Activated CD4-positive, alpha-beta T cell treated with anti-CD3 and anti-CD28 coated beads for 36 hours (primary cell): ENCODE measurements at regions of chr2 and their contacts with region 1.

Region 1: DNA sequence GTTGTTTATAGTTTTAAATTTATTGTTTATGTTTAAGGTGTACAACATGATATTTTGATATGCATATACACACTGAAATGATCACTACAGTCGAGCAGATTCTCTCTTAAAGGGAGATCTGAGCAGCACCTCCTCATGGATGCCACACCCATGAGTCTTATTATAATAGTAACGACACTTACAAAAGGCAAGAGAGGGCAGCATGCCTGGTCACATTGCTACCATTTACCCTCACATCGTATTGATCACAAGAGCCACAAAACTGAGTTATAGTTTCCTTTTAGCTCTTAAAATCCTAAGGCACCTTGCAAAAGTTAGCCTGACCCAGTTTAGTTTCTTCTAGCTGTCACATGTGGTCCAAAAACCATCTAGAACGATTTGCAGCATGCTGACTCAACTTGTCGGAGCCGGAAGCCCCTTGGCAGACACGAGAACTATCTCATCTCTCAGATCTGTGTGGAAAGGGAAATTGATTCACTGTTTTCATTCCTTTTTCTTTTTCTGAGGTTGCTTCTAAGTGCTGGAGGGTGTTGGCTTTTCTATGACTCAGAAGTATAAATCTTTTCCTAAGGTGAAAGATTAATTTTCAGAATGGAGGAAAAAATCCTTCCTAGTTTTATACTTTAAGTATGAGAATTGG is 85.3 kb downstream of the CDC42EP3 start:
- DNase-seq: peak; percentile 83
- ATAC-seq: peak; percentile 85
- H3K4me3 Mint-ChIP-seq: peak overlapping the region; percentile 22
- H3K27ac Mint-ChIP-seq: peak overlapping the region; percentile 52
- H3K4me1 Mint-ChIP-seq: peaks cover 90% of the 10 kb centered on the region
- H3K27me3 Mint-ChIP-seq: no peaks in the 10 kb centered on the region

Region 2: DNA sequence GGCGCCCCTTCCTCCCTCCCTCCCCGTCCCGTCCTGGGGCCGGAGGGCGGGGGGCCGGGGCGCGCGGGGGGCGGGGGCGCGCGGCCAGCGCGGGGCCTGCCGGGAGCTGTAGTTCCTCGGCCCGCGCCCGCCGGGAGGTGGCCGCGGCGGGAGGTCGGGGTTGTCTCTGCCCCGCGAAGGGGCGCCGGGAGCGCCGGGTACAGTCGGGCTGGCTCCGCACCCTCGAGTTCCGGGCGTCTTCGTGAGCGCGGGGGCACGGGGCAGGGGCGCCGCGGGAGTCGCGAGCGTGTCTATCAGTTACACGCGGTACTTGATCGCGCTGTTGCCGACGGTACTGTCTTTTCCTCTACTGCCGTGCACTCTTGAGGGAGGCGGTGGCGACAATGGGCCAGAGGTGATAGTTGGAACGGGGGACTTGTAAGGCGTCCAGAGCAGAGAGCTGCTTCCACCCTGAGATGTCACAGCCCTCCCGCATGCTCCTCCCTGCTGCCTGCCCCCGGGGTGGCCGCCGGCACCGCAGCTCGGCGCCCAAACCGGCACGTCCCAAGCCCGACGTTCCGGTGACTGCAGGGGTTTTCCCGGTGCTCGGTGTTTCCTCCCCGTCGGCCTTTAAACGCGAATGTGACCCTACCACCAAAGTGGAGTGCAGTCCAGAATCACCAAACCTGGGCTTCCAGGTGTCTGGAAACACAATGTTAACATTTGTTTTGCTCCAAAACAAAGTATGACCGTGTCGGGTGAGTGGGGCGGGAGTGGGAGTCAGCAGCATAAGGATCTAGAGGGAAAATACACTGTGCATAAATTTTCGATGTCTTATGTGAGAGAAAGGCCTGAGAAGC is 261.1 kb before region 1 on chr2 and contains the start of gene PRKD3:
- CTCF ChIA-PET with region 1: no interaction called
- POLR2A ChIA-PET with region 1: no interaction called
- intact Hi-C with region 1: loop called in 1 of 2 experiments (anchors 5 kb)
- DNase-seq: peak; percentile 66
- ATAC-seq: peak; percentile 76
- H3K4me3 Mint-ChIP-seq: peak within 1 kb of the TSS; percentile 91
- H3K27ac Mint-ChIP-seq: peak within 1 kb of the TSS; percentile 92
- H3K4me1 Mint-ChIP-seq: peaks cover 27% of the 10 kb centered on the region
- H3K27me3 Mint-ChIP-seq: peaks cover 17% of the 10 kb centered on the region
- total RNA-seq, gene PRKD3: 17.4 to 22.8 TPM

Region 3: DNA sequence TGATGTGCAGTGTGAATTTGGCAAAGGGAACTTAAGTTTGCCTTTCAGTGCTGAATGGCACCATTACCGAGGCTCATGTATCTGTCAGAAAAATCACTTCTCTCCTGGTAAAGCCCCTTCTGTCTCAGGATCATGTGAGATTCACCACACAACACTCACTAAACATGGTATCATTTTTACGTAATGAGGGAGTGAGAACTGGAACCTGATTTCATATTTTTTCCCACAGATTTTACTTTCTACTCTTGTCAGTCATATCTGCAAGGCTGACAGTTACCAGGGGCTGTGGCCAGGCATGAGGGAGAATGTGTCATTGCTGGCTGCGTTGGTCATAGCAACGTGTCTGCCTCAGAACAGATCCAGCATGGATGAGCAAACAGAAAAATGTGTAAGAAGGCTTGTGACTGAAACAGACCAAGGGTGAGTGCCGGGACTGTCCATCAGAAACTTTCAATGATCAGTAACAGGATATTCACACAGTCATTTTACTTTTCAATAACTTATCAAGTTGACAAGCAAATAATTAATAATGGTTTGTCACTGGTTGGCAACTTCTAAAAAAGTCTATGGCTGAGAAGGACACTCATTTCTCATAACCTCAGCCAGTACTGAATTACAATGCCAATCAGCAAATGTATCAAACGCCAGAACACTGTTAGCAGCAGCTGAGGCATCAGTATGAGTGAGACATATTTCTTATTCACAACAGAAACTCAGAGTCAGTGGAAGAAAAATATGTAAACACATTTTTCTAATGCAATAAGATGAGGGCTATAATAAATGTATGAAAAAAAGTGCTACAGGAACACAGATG is 15.1 kb before region 1 on chr2:
- CTCF ChIA-PET with region 1: interaction called, 4 read pairs
- POLR2A ChIA-PET with region 1: interaction called, 3 read pairs
- intact Hi-C with region 1: loop called (anchors 1 kb)
- DNase-seq: peak; percentile 83
- ATAC-seq: peak; percentile 92
- H3K4me3 Mint-ChIP-seq: no peak overlapping the region
- H3K27ac Mint-ChIP-seq: no peak overlapping the region
- H3K4me1 Mint-ChIP-seq: peaks cover 31% of the 10 kb centered on the region
- H3K27me3 Mint-ChIP-seq: no peaks in the 10 kb centered on the region

Region 4: GRCh38 chr2:37600735-37601134 is 14.6 kb after region 1 on chr2:
- CTCF ChIA-PET with region 1: interaction called, 5 read pairs
- POLR2A ChIA-PET with region 1: no interaction called
- intact Hi-C with region 1: loop called (anchors 1 to 2 kb)
- DNase-seq: peak; percentile 16
- ATAC-seq: peak; percentile 76
- H3K4me3 Mint-ChIP-seq: peak overlapping the region; percentile 58
- H3K27ac Mint-ChIP-seq: peak overlapping the region; percentile 5
- H3K4me1 Mint-ChIP-seq: peaks cover 47% of the 10 kb centered on the region
- H3K27me3 Mint-ChIP-seq: no peaks in the 10 kb centered on the region

Region 5: GRCh38 chr2:37623971-37624900 is 38.1 kb after region 1 on chr2:
- CTCF ChIA-PET with region 1: interaction called, 7 read pairs
- POLR2A ChIA-PET with region 1: interaction called, 5 read pairs
- intact Hi-C with region 1: loop called (anchors 1 kb)
- DNase-seq: peak; percentile 45
- ATAC-seq: peak; percentile 78
- H3K4me3 Mint-ChIP-seq: peak overlapping the region; percentile 48
- H3K27ac Mint-ChIP-seq: peak overlapping the region; percentile 85
- H3K4me1 Mint-ChIP-seq: peaks cover 76% of the 10 kb centered on the region
- H3K27me3 Mint-ChIP-seq: no peaks in the 10 kb centered on the region

Region 6: DNA sequence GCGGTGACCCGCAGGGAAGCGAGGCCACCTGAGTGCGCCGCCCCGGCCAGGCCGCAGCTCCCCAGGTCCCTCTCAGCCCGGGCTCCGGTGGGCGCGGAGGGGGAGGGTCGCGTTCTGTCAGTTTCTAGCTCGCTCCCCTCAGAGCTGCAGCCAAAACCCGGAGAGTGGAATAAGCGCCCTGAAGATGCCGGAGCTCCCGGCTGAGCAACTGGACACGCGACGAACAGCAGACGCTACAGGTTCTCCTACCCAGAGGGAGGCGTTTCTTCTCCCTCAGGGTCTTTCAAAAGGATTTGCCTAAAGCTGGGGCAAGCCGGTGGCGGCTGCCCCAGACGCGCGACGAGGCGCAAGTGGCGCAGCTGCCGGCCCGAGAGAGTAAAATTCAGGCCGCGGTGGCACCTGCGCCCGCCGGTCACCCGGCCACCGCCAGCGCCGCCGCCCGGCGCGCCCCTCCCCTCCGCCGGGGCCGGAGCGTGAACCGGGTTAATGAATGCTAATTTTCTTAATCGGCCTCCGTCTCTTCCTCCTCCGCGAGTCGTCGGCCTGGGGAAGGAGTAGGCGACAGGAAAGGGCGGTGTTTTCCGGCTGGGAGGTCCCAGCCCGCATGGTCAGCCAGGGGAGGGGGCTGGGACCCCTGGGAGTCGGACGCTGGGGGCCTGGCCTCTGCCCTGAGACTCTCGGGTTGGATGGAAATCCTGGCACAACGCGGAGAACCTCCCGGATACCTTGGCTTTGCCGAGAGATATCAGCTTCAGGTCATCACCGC is 86.2 kb after region 1 on chr2:
- CTCF ChIA-PET with region 1: interaction called, 4 read pairs
- POLR2A ChIA-PET with region 1: interaction called, 3 read pairs
- intact Hi-C with region 1: loop called (anchors 2 kb)
- DNase-seq: peak; percentile 80
- ATAC-seq: peak; percentile 34
- H3K4me3 Mint-ChIP-seq: peak overlapping the region; percentile 83
- H3K27ac Mint-ChIP-seq: peak overlapping the region; percentile 83
- H3K4me1 Mint-ChIP-seq: peaks cover 40% of the 10 kb centered on the region
- H3K27me3 Mint-ChIP-seq: no peaks in the 10 kb centered on the region